ENCODE measurements at regions of chr22 and their contacts with region 1.

Region 1: GRCh38 chr22:38981992-38982927 is at the start of gene APOBEC3B:
- DNase-seq: peak; percentile 90
- H3K4me3 Mint-ChIP-seq: peak within 1 kb of the TSS; percentile 60
- H3K27ac Mint-ChIP-seq: peak within 1 kb of the TSS; percentile 89
- H3K4me1 Mint-ChIP-seq: peaks cover 10% of the 10 kb centered on the region
- H3K27me3 Mint-ChIP-seq: no peaks in the 10 kb centered on the region
- CTCF ChIP-seq: no peak
- total RNA-seq, gene APOBEC3B: 43.2 and 43.3 TPM in 2 replicates

Region 2: DNA sequence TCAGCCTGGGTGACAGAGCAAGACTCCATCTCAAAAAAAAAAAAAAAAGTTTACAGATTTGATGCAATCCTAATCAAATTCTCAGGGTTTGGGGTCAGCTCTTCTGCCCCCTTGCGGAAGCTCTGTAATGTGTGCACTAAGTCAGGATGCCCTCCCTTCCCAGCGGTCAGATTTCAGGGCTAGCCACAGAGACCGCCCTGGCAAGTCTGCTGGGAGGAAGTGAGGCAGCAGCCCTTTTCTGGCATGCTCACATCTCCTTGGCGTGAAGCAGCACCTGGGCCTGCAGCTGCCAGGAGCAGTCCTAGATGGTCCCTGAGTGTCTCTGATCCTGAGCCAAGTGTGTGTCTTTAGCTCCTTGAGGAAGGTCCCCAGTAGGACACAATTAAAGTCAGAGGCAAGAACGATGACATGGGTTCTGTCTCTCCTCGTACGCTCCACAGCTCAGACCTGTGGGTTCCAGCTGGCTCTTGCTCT is 20.9 kb after region 1 on chr22:
- CTCF ChIA-PET with region 1: interaction called, 14 read pairs
- intact Hi-C with region 1: no loop called
- DNase-seq: peak; percentile 85
- H3K4me3 Mint-ChIP-seq: no peak overlapping the region
- H3K27ac Mint-ChIP-seq: no peak overlapping the region
- H3K4me1 Mint-ChIP-seq: no peaks in the 10 kb centered on the region
- H3K27me3 Mint-ChIP-seq: no peaks in the 10 kb centered on the region
- CTCF ChIP-seq: peak; percentile 76

Measured in Calu3 (cell line).